Activated CD4-positive, alpha-beta T cell treated with anti-CD3 and anti-CD28 coated beads for 36 hours (primary cell): ENCODE measurements at regions of chr10 and their contacts with region 1.

Region 1: GRCh38 chr10:69318106-69318866 is 40.0 kb downstream of the HK1 start:
- DNase-seq: peak; percentile 96
- ATAC-seq: peak; percentile 88
- H3K4me3 Mint-ChIP-seq: peak overlapping the region; percentile 86
- H3K27ac Mint-ChIP-seq: peak overlapping the region; percentile 92
- H3K4me1 Mint-ChIP-seq: peaks cover 53% of the 10 kb centered on the region
- H3K27me3 Mint-ChIP-seq: no peaks in the 10 kb centered on the region

Region 2: DNA sequence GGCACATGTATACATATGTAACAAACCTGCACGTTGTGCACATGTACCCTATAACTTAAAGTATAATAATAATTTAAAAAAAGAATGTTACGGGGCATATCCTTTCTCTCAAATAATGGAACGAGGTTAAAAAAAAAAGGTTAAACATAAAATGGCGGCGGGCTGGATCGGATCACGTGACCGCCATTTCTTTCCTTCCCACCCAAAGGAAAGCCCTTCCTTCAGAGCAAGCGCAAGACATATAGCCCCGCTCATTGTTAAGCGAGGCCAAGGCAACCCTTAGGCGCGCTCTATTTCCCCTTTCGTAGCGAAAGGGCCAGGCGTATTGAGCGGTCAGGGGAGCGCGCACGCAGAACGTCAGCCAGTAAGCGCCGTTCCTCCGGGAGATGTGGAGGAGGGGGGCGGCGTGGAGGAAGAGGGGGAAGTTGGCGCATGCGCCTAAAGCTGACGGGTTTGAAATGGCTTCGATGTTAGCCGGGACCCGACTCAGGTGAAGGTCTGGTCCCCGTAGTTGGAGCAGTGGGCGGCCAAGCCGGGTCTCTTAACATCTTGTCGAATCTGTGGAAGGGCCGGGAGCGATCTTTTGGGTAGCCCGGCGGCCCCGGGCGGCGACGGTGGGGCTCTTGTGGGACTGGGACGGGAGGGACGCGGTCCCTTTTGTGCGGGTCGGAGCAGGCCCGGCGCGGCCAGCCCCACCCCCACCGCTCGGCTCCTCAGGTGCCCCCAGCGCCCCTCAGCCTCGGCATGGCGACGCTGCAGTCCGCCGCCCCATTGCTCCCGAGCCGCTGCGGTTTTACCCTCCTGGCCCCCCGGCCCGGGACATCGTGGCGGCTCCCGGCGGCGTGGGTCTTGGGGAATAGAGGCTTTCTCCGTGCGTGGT is 597.3 kb before region 1 on chr10 and contains the start of gene CCAR1:
- CTCF ChIA-PET with region 1: no interaction called
- POLR2A ChIA-PET with region 1: no interaction called
- intact Hi-C with region 1: loop called in 1 of 2 experiments (anchors 5 kb)
- DNase-seq: peak; percentile 98
- ATAC-seq: peak; percentile 100
- H3K4me3 Mint-ChIP-seq: peak within 1 kb of the TSS; percentile 91
- H3K27ac Mint-ChIP-seq: peak within 1 kb of the TSS; percentile 96
- H3K4me1 Mint-ChIP-seq: peaks cover 9% of the 10 kb centered on the region
- H3K27me3 Mint-ChIP-seq: no peaks in the 10 kb centered on the region
- total RNA-seq, gene CCAR1: 89.5 to 125 TPM

Region 3: DNA sequence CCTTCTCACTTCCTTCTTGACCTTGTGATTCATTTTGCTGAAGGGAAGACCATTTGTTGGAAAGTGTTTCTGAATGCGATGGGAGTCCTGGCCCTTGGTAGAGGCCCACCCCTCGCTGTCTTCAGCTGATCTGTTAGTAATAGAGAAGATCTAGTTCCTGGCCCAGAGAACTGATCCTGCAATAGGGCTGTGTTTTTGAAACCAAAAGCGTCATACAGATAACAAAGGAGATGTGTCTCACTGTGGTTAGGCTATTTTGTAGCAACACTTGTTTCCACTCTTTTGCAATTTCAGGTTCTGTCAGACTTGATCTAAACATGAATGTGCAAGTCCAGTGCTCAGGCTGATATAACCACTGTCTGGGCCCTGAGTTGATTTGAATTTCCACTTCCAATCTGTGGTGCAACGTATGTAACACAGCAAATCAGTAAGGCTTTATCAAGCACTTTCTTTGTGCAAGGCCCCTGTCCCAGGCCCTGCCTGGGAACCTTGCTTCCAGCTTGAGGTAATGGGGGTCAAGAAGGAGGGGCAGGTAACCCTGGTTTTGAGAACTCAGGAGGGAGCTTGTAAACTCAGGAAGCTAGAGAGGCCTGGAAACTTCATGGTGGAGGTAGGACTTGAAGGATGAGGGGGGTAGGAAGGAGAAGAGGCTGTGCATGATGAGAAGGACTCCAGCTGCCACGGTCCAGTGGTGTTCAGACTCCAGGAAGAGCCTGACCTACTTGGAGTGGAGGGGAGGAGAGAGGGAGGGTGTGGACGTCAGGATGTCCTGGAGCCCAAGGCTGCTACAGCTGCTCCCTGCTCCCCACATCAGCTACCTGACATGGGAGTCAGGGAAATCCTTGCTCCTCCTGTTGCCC is 272.6 kb before region 1 on chr10:
- CTCF ChIA-PET with region 1: no interaction called
- POLR2A ChIA-PET with region 1: no interaction called
- intact Hi-C with region 1: loop called in 1 of 2 experiments (anchors 2 kb)
- DNase-seq: peak; percentile 62
- ATAC-seq: peak; percentile 80
- H3K4me3 Mint-ChIP-seq: peak overlapping the region; percentile 43
- H3K27ac Mint-ChIP-seq: peak overlapping the region; percentile 96
- H3K4me1 Mint-ChIP-seq: peaks cover 59% of the 10 kb centered on the region
- H3K27me3 Mint-ChIP-seq: no peaks in the 10 kb centered on the region

Region 4: GRCh38 chr10:69146759-69147158 is 171.5 kb before region 1 on chr10:
- CTCF ChIA-PET with region 1: no interaction called
- POLR2A ChIA-PET with region 1: no interaction called
- intact Hi-C with region 1: no loop called
- DNase-seq: no peak
- ATAC-seq: peak; percentile 16
- H3K4me3 Mint-ChIP-seq: no peak overlapping the region
- H3K27ac Mint-ChIP-seq: peak overlapping the region; percentile 15
- H3K4me1 Mint-ChIP-seq: peaks cover 17% of the 10 kb centered on the region
- H3K27me3 Mint-ChIP-seq: no peaks in the 10 kb centered on the region

Region 5: DNA sequence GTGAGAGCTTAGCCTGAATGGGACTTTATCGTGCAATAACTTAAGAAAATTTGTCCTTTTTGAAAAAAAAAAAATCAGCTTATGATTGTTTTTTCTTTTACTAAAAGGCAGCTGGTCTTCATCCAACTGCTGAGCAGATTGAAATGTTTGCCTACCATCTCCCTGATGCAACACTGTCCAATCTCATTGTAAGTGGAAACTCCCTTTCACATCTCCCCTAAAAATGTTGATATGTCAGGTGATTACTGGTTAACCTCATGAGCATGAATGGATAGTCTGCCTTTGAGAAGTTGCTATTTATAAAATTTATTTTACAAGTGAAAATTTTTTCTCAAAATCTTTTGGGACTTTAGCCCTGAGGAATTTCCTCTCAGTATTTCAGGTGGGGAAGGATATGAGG is 116.0 kb before region 1 on chr10:
- CTCF ChIA-PET with region 1: no interaction called
- POLR2A ChIA-PET with region 1: no interaction called
- intact Hi-C with region 1: no loop called
- DNase-seq: no peak
- ATAC-seq: peak; percentile 38
- H3K4me3 Mint-ChIP-seq: no peak overlapping the region
- H3K27ac Mint-ChIP-seq: no peak overlapping the region
- H3K4me1 Mint-ChIP-seq: peaks cover 5% of the 10 kb centered on the region
- H3K27me3 Mint-ChIP-seq: no peaks in the 10 kb centered on the region

Region 6: GRCh38 chr10:69222157-69223027 is 95.9 kb before region 1 on chr10:
- CTCF ChIA-PET with region 1: no interaction called
- POLR2A ChIA-PET with region 1: no interaction called
- intact Hi-C with region 1: loop called in 1 of 2 experiments (anchors 2 kb)
- DNase-seq: peak; percentile 90
- ATAC-seq: peak; percentile 92
- H3K4me3 Mint-ChIP-seq: peak overlapping the region; percentile 52
- H3K27ac Mint-ChIP-seq: peak overlapping the region; percentile 91
- H3K4me1 Mint-ChIP-seq: peaks cover 32% of the 10 kb centered on the region
- H3K27me3 Mint-ChIP-seq: no peaks in the 10 kb centered on the region

Region 7: GRCh38 chr10:69360485-69361324 is 42.4 kb after region 1 on chr10:
- CTCF ChIA-PET with region 1: no interaction called
- POLR2A ChIA-PET with region 1: no interaction called
- intact Hi-C with region 1: loop called in 1 of 2 experiments (anchors 5 kb)
- DNase-seq: no peak
- ATAC-seq: no peak
- H3K4me3 Mint-ChIP-seq: no peak overlapping the region
- H3K27ac Mint-ChIP-seq: no peak overlapping the region
- H3K4me1 Mint-ChIP-seq: peaks cover 65% of the 10 kb centered on the region
- H3K27me3 Mint-ChIP-seq: no peaks in the 10 kb centered on the region

Region 8: GRCh38 chr10:69629897-69630650 is 311.8 kb after region 1 on chr10 and contains the start of gene FAM241B:
- CTCF ChIA-PET with region 1: no interaction called
- POLR2A ChIA-PET with region 1: no interaction called
- intact Hi-C with region 1: loop called in 1 of 2 experiments (anchors 2 kb)
- DNase-seq: peak; percentile 89
- ATAC-seq: peak; percentile 95
- H3K4me3 Mint-ChIP-seq: peak within 1 kb of the TSS; percentile 63
- H3K27ac Mint-ChIP-seq: peak within 1 kb of the TSS; percentile 47
- H3K4me1 Mint-ChIP-seq: peaks cover 16% of the 10 kb centered on the region
- H3K27me3 Mint-ChIP-seq: no peaks in the 10 kb centered on the region
- total RNA-seq, gene FAM241B: 6.3 to 9.6 TPM